ENCODE measurements at regions of chr6 and their contacts with region 1.

Region 1: GRCh38 chr6:47413752-47414422 is 63.7 kb upstream of the CD2AP start:
- DNase-seq: no peak
- ATAC-seq: peak; percentile 76 to 92 (median 81)
- H3K4me3 ChIP-seq: peak overlapping the region; percentile 64
- H3K27ac ChIP-seq: no peak overlapping the region
- H3K4me1 ChIP-seq: peaks cover 4% of the 10 kb centered on the region
- H3K27me3 ChIP-seq: no peaks in the 10 kb centered on the region
- CTCF ChIP-seq: peak; percentile 90

Region 2: DNA sequence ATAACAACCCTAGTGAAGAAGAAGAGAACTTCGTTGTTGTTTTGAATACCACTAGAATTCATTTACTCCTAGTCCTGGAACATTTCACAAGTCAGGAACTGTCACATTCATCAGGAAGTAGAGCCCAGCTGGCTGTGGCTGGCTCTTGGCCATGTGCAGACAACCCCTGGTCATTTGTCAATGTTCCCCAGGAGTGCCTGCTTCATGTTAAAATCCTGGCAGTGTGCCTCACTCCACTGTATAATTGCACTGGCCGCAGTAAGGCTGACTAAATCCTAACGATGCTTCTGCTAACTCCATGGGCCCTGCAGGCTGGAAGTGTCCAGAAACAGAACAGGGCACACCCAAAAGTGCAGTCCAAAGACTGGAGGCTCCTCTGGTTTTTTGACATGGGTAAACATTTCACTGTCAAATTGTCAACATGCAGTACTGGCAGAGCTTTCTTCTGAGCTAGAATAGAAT is 330.3 kb before region 1 on chr6:
- intact Hi-C with region 1: no loop called
- DNase-seq: peak; percentile 86 to 94
- ATAC-seq: peak; percentile 83 to 96 (median 92)
- H3K4me3 ChIP-seq: no peak overlapping the region
- H3K27ac ChIP-seq: no peak overlapping the region
- H3K4me1 ChIP-seq: no peaks in the 10 kb centered on the region
- H3K27me3 ChIP-seq: peaks cover 0 to 3% (median 0%) of the 10 kb centered on the region in 3 donors
- CTCF ChIP-seq: no peak

Region 3: GRCh38 chr6:47477497-47478232 is 63.8 kb after region 1 on chr6 and contains the start of gene CD2AP:
- intact Hi-C with region 1: loop called in 1 of 2 experiments (anchors 5 kb)
- DNase-seq: peak; percentile 85 to 88
- ATAC-seq: peak; percentile 92 to 96 (median 94)
- H3K4me3 ChIP-seq: peak within 1 kb of the TSS; percentile 66
- H3K27ac ChIP-seq: peak within 1 kb of the TSS; percentile 76
- H3K4me1 ChIP-seq: peaks cover 12% of the 10 kb centered on the region
- H3K27me3 ChIP-seq: no peaks in the 10 kb centered on the region
- CTCF ChIP-seq: peak; percentile 9
- total RNA-seq, gene CD2AP: 8.3 to 11.7 (median 9.9) TPM

Region 4: GRCh38 chr6:47603995-47604394 is 190.1 kb after region 1 on chr6:
- intact Hi-C with region 1: loop called in 1 of 2 experiments (anchors 10 kb)
- DNase-seq: no peak
- ATAC-seq: no peak
- H3K4me3 ChIP-seq: no peak overlapping the region
- H3K27ac ChIP-seq: no peak overlapping the region
- H3K4me1 ChIP-seq: no peaks in the 10 kb centered on the region
- H3K27me3 ChIP-seq: no peaks in the 10 kb centered on the region
- CTCF ChIP-seq: no peak

Region 5: GRCh38 chr6:47621838-47622449 is 208.1 kb after region 1 on chr6:
- intact Hi-C with region 1: loop called in 1 of 2 experiments (anchors 10 kb)
- DNase-seq: no peak
- ATAC-seq: no peak
- H3K4me3 ChIP-seq: no peak overlapping the region
- H3K27ac ChIP-seq: no peak overlapping the region
- H3K4me1 ChIP-seq: no peaks in the 10 kb centered on the region
- H3K27me3 ChIP-seq: no peaks in the 10 kb centered on the region
- CTCF ChIP-seq: no peak

Region 6: GRCh38 chr6:47780510-47781356 is 366.8 kb after region 1 on chr6:
- intact Hi-C with region 1: loop called (anchors 5 kb)
- DNase-seq: no peak
- ATAC-seq: peak; percentile 68 to 92 (median 86)
- H3K4me3 ChIP-seq: peak overlapping the region; percentile 4
- H3K27ac ChIP-seq: no peak overlapping the region
- H3K4me1 ChIP-seq: no peaks in the 10 kb centered on the region
- H3K27me3 ChIP-seq: no peaks in the 10 kb centered on the region
- CTCF ChIP-seq: peak; percentile 66